ENCODE measurements at regions of chr19 and their contacts with region 1.

Region 1: GRCh38 chr19:34171877-34172660 is at the start of gene LSM14A:
- DNase-seq: peak; percentile 95
- ATAC-seq: peak; percentile 70
- H3K4me3 Mint-ChIP-seq: peak within 1 kb of the TSS; percentile 88
- H3K27ac Mint-ChIP-seq: peak within 1 kb of the TSS; percentile 99
- H3K4me1 Mint-ChIP-seq: peaks cover 36% of the 10 kb centered on the region
- H3K27me3 Mint-ChIP-seq: no peaks in the 10 kb centered on the region
- total RNA-seq, gene LSM14A: 89.0 to 151 TPM

Region 2: DNA sequence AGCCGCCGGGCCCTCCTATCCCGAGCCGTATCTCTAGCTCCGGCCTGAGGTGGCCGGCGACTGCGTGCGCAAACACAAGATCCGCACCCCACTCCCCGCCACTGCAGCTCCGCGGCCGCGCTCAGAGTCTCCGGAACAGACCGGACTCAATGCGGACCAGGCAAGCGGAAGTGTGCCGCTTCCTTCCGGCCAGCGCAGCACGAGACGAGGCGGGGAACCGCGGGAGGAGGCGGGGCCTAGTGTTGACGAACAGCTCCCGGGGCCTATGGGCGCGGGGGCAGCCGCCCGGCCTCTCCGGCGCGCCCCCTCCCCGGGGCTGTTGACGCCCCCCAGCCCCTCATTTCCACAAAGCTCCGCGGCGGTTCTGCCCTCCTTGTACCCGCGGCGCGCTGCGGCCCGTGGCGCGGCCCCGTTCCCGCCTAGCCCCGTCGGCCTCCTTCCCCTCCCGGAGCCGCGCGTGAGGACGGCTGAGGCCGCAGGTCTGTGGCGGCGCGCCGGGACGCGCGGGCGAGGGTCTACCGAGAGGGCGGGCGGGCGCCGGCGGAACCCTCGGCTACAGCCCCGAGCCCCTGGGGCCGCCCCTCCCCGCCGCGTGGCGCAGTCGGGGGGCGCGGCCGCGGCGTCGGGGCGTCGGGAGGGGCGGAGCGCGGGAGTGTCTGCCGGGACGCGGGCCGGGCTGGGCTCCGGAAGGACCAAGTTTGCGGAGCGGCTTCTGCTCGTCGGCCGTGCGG is 1766.5 kb before region 1 on chr19 and contains the start of gene DPY19L3:
- CTCF ChIA-PET with region 1: no interaction called
- POLR2A ChIA-PET with region 1: no interaction called
- intact Hi-C with region 1: loop called in 1 of 2 experiments (anchors 10 kb)
- DNase-seq: peak; percentile 95
- ATAC-seq: peak; percentile 97
- H3K4me3 Mint-ChIP-seq: peak within 1 kb of the TSS; percentile 84
- H3K27ac Mint-ChIP-seq: peak within 1 kb of the TSS; percentile 91
- H3K4me1 Mint-ChIP-seq: peaks cover 20% of the 10 kb centered on the region
- H3K27me3 Mint-ChIP-seq: no peaks in the 10 kb centered on the region
- total RNA-seq, gene DPY19L3: 14.3 to 14.6 TPM

Region 3: GRCh38 chr19:33795370-33796163 is 376.5 kb before region 1 on chr19:
- CTCF ChIA-PET with region 1: no interaction called
- POLR2A ChIA-PET with region 1: no interaction called
- intact Hi-C with region 1: loop called in 1 of 2 experiments (anchors 2 kb)
- DNase-seq: peak; percentile 77
- ATAC-seq: peak; percentile 59
- H3K4me3 Mint-ChIP-seq: peak overlapping the region; percentile 72
- H3K27ac Mint-ChIP-seq: no peak overlapping the region
- H3K4me1 Mint-ChIP-seq: peaks cover 2% of the 10 kb centered on the region
- H3K27me3 Mint-ChIP-seq: peaks cover 24% of the 10 kb centered on the region

Region 4: GRCh38 chr19:34220472-34221063 is 48.5 kb after region 1 on chr19:
- CTCF ChIA-PET with region 1: interaction called, 4 read pairs
- POLR2A ChIA-PET with region 1: interaction called, 3 read pairs
- intact Hi-C with region 1: loop called in 1 of 2 experiments (anchors 1 kb)
- DNase-seq: peak; percentile 81
- ATAC-seq: no peak
- H3K4me3 Mint-ChIP-seq: no peak overlapping the region
- H3K27ac Mint-ChIP-seq: no peak overlapping the region
- H3K4me1 Mint-ChIP-seq: peaks cover 59% of the 10 kb centered on the region
- H3K27me3 Mint-ChIP-seq: no peaks in the 10 kb centered on the region

Region 5: GRCh38 chr19:34269968-34270621 is 98.0 kb after region 1 on chr19:
- CTCF ChIA-PET with region 1: no interaction called
- POLR2A ChIA-PET with region 1: no interaction called
- intact Hi-C with region 1: loop called (anchors 2 to 5 kb)
- DNase-seq: peak; percentile 82
- ATAC-seq: peak; percentile 90
- H3K4me3 Mint-ChIP-seq: peak overlapping the region; percentile 53
- H3K27ac Mint-ChIP-seq: peak overlapping the region; percentile 95
- H3K4me1 Mint-ChIP-seq: peaks cover 72% of the 10 kb centered on the region
- H3K27me3 Mint-ChIP-seq: no peaks in the 10 kb centered on the region

Region 6: DNA sequence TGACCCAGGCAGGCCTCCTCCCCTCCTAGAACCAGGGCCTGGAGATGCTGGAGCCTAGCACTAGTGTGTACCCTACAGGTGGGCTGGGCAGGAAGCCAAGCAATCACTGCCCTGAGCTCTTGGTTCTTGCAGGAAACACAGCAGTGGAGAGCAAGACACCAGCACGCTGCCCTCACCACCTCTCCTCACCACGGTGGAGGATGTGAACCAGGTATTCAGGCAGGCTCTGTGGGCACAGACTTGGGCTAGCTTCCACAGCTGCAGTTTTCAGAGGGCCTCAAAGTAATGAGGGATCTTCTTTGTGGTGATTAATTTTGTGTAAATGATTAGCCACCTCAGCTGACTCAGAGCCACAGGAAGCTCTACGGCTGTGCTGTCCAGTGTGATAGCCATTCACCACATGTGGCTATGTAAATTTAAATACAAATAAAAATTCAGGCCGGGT is 179.3 kb after region 1 on chr19:
- CTCF ChIA-PET with region 1: interaction called, 3 read pairs
- POLR2A ChIA-PET with region 1: no interaction called
- intact Hi-C with region 1: loop called (anchors 1 to 2 kb)
- DNase-seq: peak; percentile 21
- ATAC-seq: no peak
- H3K4me3 Mint-ChIP-seq: no peak overlapping the region
- H3K27ac Mint-ChIP-seq: peak overlapping the region; percentile 72
- H3K4me1 Mint-ChIP-seq: peaks cover 17% of the 10 kb centered on the region
- H3K27me3 Mint-ChIP-seq: no peaks in the 10 kb centered on the region

Region 7: DNA sequence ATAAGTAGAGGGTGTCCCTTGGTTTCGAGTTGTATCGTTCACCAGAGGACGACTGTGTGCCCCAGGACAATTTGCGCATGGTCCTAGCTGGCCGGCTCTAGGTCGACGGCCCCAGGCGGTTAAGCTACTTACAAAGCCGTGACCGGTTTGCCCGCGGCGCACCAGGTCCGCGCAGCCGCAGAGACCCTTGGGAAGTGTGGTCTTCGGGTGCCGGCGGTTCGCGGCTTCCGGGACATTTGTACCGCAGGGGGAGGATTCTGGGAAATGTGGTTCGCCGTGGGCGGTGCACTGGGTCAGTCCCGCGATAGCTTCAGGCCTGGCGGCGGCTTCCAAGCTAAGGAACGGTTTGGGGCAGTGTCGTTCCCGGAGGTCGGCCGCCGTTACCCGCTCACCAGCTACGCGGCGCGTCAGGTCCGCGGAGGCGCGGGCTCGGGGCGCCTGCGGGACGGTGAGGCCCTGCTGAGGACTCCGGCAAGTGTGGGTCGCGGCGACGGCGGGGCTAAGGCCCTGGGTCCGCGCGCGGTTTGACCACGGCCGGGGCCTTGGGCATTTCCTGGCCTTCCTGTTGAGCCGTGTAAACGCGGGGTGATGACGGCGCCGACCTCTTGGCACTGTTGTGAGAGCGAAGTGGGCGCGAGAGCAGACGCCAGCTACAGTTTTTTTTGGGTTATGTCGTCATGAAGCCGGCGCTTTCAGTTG is 505.5 kb after region 1 on chr19 and contains the start of gene ZNF302:
- CTCF ChIA-PET with region 1: no interaction called
- POLR2A ChIA-PET with region 1: no interaction called
- intact Hi-C with region 1: loop called in 1 of 2 experiments (anchors 1 kb)
- DNase-seq: peak; percentile 97
- ATAC-seq: peak; percentile 86
- H3K4me3 Mint-ChIP-seq: peak within 1 kb of the TSS; percentile 81
- H3K27ac Mint-ChIP-seq: peak within 1 kb of the TSS; percentile 99
- H3K4me1 Mint-ChIP-seq: peaks cover 23% of the 10 kb centered on the region
- H3K27me3 Mint-ChIP-seq: no peaks in the 10 kb centered on the region
- total RNA-seq, gene ZNF302: 17.1 to 17.6 TPM

Measured in activated CD4-positive, alpha-beta T cell treated with anti-CD3 and anti-CD28 coated beads for 36 hours (primary cell).